GM13977 (cell line): ENCODE measurements at regions of chr2 and their contacts with region 1.

Region 1: DNA sequence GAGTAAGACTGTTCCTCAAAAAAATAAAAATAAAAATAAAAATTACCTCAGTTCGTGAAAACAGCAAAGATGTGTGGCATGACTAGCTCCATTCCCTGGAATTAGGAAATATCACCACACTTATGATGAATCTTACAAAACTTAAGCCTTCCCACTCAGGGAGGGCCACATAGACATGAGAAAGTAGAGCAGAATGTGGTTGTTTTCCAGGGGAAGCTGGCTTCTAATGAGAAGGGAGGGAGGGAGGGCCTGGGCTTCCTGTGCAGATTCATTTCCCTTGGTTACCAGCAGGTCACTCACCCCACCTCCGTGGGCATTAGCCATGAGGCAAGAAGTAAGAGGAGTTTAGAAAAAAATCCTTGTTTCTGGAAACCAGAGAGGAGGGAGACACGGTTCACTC is 95.9 kb upstream of the RMDN2 start:
- DNase-seq: no peak
- CTCF ChIP-seq: no peak

Region 2: DNA sequence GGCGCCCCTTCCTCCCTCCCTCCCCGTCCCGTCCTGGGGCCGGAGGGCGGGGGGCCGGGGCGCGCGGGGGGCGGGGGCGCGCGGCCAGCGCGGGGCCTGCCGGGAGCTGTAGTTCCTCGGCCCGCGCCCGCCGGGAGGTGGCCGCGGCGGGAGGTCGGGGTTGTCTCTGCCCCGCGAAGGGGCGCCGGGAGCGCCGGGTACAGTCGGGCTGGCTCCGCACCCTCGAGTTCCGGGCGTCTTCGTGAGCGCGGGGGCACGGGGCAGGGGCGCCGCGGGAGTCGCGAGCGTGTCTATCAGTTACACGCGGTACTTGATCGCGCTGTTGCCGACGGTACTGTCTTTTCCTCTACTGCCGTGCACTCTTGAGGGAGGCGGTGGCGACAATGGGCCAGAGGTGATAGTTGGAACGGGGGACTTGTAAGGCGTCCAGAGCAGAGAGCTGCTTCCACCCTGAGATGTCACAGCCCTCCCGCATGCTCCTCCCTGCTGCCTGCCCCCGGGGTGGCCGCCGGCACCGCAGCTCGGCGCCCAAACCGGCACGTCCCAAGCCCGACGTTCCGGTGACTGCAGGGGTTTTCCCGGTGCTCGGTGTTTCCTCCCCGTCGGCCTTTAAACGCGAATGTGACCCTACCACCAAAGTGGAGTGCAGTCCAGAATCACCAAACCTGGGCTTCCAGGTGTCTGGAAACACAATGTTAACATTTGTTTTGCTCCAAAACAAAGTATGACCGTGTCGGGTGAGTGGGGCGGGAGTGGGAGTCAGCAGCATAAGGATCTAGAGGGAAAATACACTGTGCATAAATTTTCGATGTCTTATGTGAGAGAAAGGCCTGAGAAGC is 504.2 kb before region 1 on chr2 and contains the start of gene PRKD3:
- in situ Hi-C with region 1: no loop called
- DNase-seq: peak; percentile 90
- CTCF ChIP-seq: no peak

Region 3: DNA sequence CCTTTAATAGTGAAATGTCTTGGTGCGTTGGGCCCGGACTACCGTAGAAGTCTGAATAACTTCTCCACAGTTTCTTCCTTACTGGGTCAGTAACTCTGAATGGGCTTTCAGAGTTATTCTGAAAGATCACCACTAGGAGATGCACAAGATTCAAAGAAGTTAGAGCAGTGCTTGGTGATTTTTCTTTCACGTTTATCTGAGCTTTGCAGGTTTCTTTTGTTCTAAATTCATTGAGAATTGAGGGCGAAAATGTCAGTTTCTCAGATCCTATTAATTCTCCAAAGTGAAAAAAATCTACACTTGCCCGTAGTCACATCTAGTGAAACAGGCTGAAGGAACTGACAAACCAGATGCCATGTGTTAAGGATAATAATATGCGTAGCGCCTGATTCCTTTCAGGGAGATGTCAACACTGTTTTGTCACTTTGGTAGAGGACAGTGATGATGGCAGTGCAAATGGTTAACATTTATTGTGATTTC is 414.7 kb before region 1 on chr2:
- in situ Hi-C with region 1: loop called (anchors 5 kb)
- DNase-seq: peak; percentile 75
- CTCF ChIP-seq: peak; percentile 88